Right cardiac atrium (tissue), 5 donors: ENCODE measurements at regions of chr13 and their contacts with region 1.

Region 1: GRCh38 chr13:67075239-67075638 is 154.9 kb downstream of the PCDH9 start:
- DNase-seq: no peak
- ATAC-seq: peak; percentile 49 to 79
- H3K4me3 ChIP-seq: no peak overlapping the region
- H3K27ac ChIP-seq: no peak overlapping the region
- H3K4me1 ChIP-seq: peaks cover 2% of the 10 kb centered on the region
- H3K27me3 ChIP-seq: no peaks in the 10 kb centered on the region

Region 2: GRCh38 chr13:66830940-66831716 is 244.1 kb before region 1 on chr13:
- intact Hi-C with region 1: no loop called
- DNase-seq: no peak
- ATAC-seq: no peak
- H3K4me3 ChIP-seq: no peak overlapping the region
- H3K27ac ChIP-seq: no peak overlapping the region
- H3K4me1 ChIP-seq: peaks cover 1% of the 10 kb centered on the region
- H3K27me3 ChIP-seq: no peaks in the 10 kb centered on the region

Region 3: DNA sequence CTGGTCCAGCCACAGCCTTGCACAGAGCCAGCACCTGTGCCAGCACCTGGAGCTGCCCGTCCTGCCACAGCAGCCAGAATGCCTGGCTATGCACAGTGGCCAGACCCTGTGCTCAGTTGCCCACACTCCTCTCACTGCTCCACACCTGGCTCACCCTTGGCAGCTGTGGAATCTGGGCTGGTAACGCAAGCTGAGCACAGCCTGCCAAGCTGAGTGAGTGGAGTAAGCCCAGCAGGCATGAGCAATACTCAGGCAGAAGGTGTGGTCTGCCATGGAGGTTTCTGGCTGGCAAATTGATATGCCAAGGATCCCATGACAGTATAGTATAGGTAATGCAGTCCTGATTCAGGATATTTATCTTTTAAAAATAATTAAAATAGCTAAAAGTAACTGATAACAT is 32.7 kb after region 1 on chr13:
- intact Hi-C with region 1: no loop called
- DNase-seq: peak in 1 of 3 donors; percentile 10
- ATAC-seq: peak in 1 of 2 donors; percentile 19
- H3K4me3 ChIP-seq: no peak overlapping the region
- H3K27ac ChIP-seq: no peak overlapping the region
- H3K4me1 ChIP-seq: no peaks in the 10 kb centered on the region
- H3K27me3 ChIP-seq: no peaks in the 10 kb centered on the region

Region 4: GRCh38 chr13:67134417-67135129 is 59.3 kb after region 1 on chr13:
- intact Hi-C with region 1: loop called in 1 of 4 experiments (anchors 10 kb)
- DNase-seq: no peak
- ATAC-seq: peak; percentile 16 to 53
- H3K4me3 ChIP-seq: peak overlapping the region; percentile 56
- H3K27ac ChIP-seq: peak overlapping the region; percentile 72
- H3K4me1 ChIP-seq: peaks cover 2% of the 10 kb centered on the region
- H3K27me3 ChIP-seq: no peaks in the 10 kb centered on the region

Region 5: DNA sequence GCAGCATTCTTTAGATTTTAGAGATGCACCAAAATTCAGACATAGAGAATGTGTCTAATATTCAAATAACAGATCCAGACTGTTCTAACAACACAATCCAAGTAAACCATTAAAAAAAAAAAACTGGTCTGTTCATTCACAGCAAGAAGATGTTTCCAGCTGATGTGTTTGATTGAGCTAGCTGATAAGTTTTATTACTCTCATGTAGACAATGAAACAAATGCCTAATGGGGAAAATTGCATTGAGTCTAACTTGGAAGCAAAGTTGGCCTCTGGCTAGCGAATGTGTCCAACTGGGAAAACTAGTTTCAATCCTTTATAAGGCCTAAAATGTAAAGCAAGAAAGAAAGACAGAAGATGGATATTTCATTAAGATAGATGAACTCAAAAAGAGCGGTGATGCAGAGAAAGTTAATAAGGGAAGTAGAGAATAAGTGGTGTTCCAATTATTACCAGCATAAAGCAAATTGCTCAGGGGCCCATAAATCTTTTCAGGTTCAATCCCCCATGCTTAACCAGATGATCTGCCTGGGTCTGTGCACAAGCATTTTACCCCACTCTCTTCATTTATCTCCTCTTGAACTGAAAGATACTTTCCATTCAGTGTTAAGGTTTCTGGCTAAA is 100.7 kb after region 1 on chr13:
- intact Hi-C with region 1: no loop called
- DNase-seq: no peak
- ATAC-seq: no peak
- H3K4me3 ChIP-seq: no peak overlapping the region
- H3K27ac ChIP-seq: no peak overlapping the region
- H3K4me1 ChIP-seq: no peaks in the 10 kb centered on the region
- H3K27me3 ChIP-seq: no peaks in the 10 kb centered on the region

Region 6: GRCh38 chr13:67224148-67224846 is 149.1 kb after region 1 on chr13:
- intact Hi-C with region 1: loop called (anchors 5 to 10 kb)
- DNase-seq: peak; percentile 74 to 90 (median 88)
- ATAC-seq: peak; percentile 84 to 89
- H3K4me3 ChIP-seq: peak overlapping the region; percentile 43
- H3K27ac ChIP-seq: no peak overlapping the region
- H3K4me1 ChIP-seq: peaks cover 7% of the 10 kb centered on the region
- H3K27me3 ChIP-seq: no peaks in the 10 kb centered on the region

Region 7: DNA sequence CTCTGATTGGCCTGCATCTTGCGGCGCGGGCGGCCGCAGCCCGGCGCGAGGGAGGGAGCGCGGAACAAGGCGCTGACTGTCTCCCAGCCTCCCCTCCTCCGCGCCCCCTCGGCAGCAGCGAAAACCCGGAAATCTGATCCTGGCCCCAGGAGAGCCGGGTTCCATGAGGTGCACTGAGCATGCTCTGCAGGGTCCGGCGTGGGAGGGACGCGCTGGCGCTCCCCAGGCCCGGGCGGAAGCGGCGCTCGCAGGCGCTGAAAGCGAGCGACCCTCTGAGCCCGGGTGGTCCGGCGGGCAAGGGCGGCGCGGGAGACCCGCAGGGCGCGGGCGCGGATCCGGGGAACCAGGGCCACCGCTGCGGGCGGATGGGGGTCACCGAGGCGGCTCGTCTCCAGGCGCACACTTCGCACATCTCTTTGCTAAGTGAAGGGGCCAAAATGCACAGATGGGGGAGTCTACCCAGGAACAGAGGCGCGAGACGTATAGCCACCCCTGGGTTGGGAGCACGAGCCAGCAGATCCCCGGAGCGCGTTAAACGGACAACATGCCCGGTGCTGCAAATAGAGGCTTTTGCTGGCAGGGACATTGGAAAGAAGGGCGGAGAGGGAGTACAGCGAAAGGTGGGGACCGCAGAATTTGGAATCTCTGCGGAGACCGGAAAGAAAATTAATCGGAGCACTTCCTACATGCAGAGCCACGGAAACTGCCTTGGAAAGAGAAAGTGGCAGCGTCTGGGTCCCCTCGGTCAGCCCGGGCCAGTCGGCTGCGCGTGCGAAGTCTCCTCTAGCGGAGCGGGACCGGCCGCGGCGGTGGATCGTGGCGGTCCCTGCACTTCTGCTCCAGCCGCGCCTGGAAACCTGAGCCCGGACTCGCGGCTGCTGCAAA is 155.4 kb after region 1 on chr13:
- intact Hi-C with region 1: loop called (anchors 5 to 10 kb)
- DNase-seq: peak; percentile 96 to 99 (median 99)
- ATAC-seq: peak; percentile 99 to 100
- H3K4me3 ChIP-seq: peak overlapping the region; percentile 82
- H3K27ac ChIP-seq: peak overlapping the region; percentile 98
- H3K4me1 ChIP-seq: peaks cover 4% of the 10 kb centered on the region
- H3K27me3 ChIP-seq: no peaks in the 10 kb centered on the region